Panc1 (cell line): ENCODE measurements at regions of chr2 and their contacts with region 1.

Region 1: GRCh38 chr2:37231241-37232130 is at the starts of genes CEBPZ and NDUFAF7:
- DNase-seq: peak; percentile 71
- ATAC-seq: peak; percentile 99
- H3K4me3 ChIP-seq: peak within 1 kb of the TSS; percentile 64 to 90
- H3K27ac ChIP-seq: peak within 1 kb of the TSS; percentile 87
- H3K4me1 ChIP-seq: peaks cover 16% of the 10 kb centered on the region
- H3K27me3 ChIP-seq: no peaks in the 10 kb centered on the region
- CTCF ChIP-seq: no peak
- total RNA-seq, gene CEBPZ: 63.8 TPM
- total RNA-seq, gene NDUFAF7: 17.7 TPM

Region 2: DNA sequence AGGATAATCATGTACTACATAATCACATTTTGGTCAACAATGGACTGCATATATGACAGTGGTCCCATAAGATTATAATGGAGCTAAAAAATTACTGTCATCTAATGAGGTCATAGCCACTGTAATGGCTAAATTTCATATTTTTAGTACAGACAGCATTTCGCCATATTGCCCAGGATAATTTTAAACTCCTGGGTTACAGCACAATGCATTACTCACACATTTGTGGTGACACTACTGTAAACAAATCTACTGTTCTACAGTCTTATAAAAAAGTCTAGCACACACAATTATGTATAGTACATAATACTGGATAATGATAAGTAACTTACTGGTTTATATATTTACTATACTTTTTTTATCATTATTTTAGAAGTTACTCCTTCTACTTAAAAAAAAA is 87.5 kb before region 1 on chr2:
- CTCF ChIA-PET with region 1: no interaction called
- POLR2A ChIA-PET with region 1: interaction called, 24 read pairs
- in situ Hi-C with region 1: no loop called
- intact Hi-C with region 1: no loop called
- DNase-seq: no peak
- ATAC-seq: no peak
- H3K4me3 ChIP-seq: no peak overlapping the region
- H3K27ac ChIP-seq: no peak overlapping the region
- H3K4me1 ChIP-seq: no peaks in the 10 kb centered on the region
- H3K27me3 ChIP-seq: no peaks in the 10 kb centered on the region
- CTCF ChIP-seq: no peak

Region 3: GRCh38 chr2:37523814-37524362 is 292.4 kb after region 1 on chr2:
- CTCF ChIA-PET with region 1: no interaction called
- POLR2A ChIA-PET with region 1: no interaction called
- in situ Hi-C with region 1: no loop called
- intact Hi-C with region 1: no loop called
- DNase-seq: no peak
- ATAC-seq: no peak
- H3K4me3 ChIP-seq: no peak overlapping the region
- H3K27ac ChIP-seq: no peak overlapping the region
- H3K4me1 ChIP-seq: no peaks in the 10 kb centered on the region
- H3K27me3 ChIP-seq: no peaks in the 10 kb centered on the region
- CTCF ChIP-seq: no peak